ENCODE measurements at regions of chr12 and their contacts with region 1.

Region 1: DNA sequence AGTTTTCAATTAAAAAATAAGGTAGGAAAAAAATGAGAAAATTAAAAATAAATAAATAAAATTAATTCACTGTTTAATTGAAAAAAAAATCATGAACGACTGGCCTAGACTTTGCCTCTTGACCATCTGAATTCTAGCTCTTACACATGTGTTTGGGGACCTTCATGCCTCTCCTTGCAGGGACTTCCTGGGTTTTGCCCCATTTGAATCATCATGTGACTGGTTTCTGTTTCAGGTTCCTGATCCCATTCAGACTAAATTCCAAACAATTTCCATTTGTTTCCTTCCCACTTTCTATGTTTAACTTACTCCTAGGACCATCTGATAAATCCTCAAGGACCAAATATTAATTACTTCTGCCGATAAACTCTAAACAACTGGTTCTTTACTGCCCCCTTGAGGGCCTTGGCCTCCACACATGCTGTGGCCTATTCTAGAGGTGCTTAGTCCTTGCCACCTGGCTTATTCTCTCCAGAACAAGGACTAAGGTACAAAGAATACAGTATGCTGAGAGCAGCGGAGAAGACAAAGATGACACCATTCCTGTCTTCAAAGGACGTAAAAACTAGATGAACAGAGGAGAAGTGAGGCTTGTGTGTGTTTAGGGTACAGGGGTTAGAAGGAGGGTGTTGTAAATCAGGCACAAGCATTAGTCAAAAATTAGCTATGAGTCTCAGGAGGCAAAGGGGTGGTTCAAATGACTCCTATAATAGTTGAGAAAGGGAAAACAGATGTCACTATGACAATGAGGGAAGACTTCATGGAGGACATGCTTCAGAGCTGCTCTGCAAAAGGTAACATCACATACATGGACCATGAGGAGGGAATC is 125.8 kb upstream of the AVPR1A start:
- DNase-seq: peak; percentile 17
- H3K4me3 ChIP-seq: no peak overlapping the region
- H3K27ac ChIP-seq: no peak overlapping the region
- H3K4me1 ChIP-seq: no peaks in the 10 kb centered on the region
- H3K27me3 ChIP-seq: no peaks in the 10 kb centered on the region
- CTCF ChIP-seq: peak; percentile 39

Region 2: DNA sequence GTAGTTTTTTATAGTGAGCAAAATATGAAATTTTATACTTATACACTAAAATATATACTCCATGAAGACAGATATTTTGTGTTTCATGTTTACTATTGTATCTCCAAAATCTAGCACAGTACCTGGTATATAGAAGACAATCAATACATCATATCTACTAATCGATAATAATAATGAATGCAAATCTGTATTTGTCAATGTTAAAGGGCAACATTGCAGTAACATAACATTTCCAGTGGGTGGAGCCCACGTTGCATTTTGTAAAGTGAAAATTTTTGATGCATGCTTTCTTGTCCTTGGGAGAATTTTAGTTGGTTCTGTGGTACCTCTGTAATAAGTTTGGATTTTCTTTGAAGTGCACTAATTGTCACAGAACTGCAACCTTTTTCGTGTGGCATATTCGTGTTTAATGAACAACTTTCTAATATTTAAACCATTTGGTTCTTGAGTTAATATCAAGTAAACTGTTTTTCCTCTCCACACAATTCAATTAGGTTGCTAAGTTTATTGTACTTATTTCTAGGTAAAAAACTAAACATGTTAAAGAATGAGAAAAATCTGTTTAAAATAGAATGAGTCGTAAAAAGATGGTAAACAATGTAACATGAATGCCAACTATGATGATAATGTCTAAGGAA is 173.1 kb before region 1 on chr12:
- intact Hi-C with region 1: loop called (anchors 10 kb)
- DNase-seq: no peak
- H3K4me3 ChIP-seq: no peak overlapping the region
- H3K27ac ChIP-seq: no peak overlapping the region
- H3K4me1 ChIP-seq: no peaks in the 10 kb centered on the region
- H3K27me3 ChIP-seq: no peaks in the 10 kb centered on the region
- CTCF ChIP-seq: peak; percentile 74

Measured in colonic mucosa (tissue), 4 donors.